Activated CD4-positive, alpha-beta T cell treated with anti-CD3 and anti-CD28 coated beads for 36 hours (primary cell): ENCODE measurements at regions of chr7 and their contacts with region 1.

Region 1: DNA sequence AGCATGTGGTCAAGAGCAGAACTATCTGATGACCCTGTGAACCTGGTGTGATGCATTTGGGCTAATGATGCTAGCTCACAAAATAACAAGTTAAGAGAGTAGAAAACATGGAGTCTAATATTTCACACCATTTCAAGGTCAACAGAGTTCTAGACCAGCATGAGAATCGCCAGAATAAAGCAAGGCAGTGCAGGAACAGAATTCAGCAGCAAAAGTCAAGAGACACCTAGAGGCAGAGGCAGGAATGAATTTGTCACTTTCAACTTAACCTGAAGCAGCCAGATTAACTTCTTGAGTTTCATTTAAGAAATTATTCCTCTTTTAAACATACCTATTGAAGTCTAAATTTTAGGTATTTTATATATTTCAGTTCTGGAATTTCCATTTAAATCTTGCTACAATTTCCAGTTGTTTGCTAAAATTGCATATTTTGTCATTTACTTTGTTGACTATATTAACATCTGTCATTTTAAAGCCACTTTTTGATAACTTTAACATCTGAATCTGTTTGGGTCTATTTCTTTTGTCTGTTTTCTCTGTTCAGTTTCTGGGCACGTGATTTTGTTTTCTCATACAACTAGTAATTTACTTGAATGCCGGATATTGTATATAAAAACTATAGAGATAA is 44.2 kb upstream of the PRSS58 start:
- DNase-seq: no peak
- ATAC-seq: no peak
- H3K4me3 Mint-ChIP-seq: no peak overlapping the region
- H3K27ac Mint-ChIP-seq: no peak overlapping the region
- H3K4me1 Mint-ChIP-seq: peaks cover 29% of the 10 kb centered on the region
- H3K27me3 Mint-ChIP-seq: peaks cover 8% of the 10 kb centered on the region

Region 2: DNA sequence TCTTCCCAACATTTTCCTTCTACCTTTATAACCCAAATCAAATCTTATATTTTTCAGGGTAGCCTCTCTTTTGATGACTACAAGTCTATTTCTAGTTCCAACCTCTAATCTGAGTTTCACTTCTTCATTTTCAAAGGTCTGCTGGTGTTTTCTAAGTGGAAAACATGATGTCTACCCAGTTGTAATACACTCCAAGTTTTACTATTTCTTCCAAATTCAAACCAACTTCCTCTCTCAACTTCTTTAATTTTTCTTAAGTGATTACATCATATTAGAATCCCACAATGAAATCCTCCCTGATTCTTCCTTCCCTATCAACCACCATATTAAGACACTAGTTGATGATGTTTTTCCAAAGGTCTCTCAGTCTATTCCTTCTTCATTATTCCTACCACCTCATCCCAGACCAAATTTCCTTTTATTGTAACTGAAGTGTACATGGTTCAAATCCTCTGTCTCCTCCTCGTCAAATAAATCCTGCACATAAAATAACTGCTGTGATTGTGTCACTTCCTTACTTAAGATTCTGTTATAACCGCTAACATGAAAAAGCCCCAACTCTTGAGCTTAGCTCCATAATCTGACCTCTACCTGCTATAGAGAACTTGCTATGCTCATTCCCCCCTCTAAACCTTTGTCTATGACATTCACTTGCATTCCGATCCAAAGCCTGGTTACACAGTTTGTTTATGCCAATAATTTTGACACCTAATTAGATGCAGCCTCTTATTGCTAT is 341.2 kb before region 1 on chr7:
- CTCF ChIA-PET with region 1: no interaction called
- POLR2A ChIA-PET with region 1: no interaction called
- intact Hi-C with region 1: no loop called
- DNase-seq: no peak
- ATAC-seq: no peak
- H3K4me3 Mint-ChIP-seq: no peak overlapping the region
- H3K27ac Mint-ChIP-seq: no peak overlapping the region
- H3K4me1 Mint-ChIP-seq: peaks cover 3% of the 10 kb centered on the region
- H3K27me3 Mint-ChIP-seq: peaks cover 3% of the 10 kb centered on the region

Region 3: GRCh38 chr7:142063551-142064442 is 238.2 kb before region 1 on chr7:
- CTCF ChIA-PET with region 1: no interaction called
- POLR2A ChIA-PET with region 1: no interaction called
- intact Hi-C with region 1: no loop called
- DNase-seq: no peak
- ATAC-seq: no peak
- H3K4me3 Mint-ChIP-seq: no peak overlapping the region
- H3K27ac Mint-ChIP-seq: no peak overlapping the region
- H3K4me1 Mint-ChIP-seq: no peaks in the 10 kb centered on the region
- H3K27me3 Mint-ChIP-seq: peaks cover 6% of the 10 kb centered on the region

Region 4: GRCh38 chr7:142313528-142313927 is 11.5 kb after region 1 on chr7:
- CTCF ChIA-PET with region 1: interaction called, 58 read pairs
- POLR2A ChIA-PET with region 1: no interaction called
- intact Hi-C with region 1: no loop called
- DNase-seq: peak; percentile 63
- ATAC-seq: peak; percentile 82
- H3K4me3 Mint-ChIP-seq: peak overlapping the region; percentile 55
- H3K27ac Mint-ChIP-seq: peak overlapping the region; percentile 37
- H3K4me1 Mint-ChIP-seq: peaks cover 13% of the 10 kb centered on the region
- H3K27me3 Mint-ChIP-seq: peaks cover 13% of the 10 kb centered on the region

Region 5: DNA sequence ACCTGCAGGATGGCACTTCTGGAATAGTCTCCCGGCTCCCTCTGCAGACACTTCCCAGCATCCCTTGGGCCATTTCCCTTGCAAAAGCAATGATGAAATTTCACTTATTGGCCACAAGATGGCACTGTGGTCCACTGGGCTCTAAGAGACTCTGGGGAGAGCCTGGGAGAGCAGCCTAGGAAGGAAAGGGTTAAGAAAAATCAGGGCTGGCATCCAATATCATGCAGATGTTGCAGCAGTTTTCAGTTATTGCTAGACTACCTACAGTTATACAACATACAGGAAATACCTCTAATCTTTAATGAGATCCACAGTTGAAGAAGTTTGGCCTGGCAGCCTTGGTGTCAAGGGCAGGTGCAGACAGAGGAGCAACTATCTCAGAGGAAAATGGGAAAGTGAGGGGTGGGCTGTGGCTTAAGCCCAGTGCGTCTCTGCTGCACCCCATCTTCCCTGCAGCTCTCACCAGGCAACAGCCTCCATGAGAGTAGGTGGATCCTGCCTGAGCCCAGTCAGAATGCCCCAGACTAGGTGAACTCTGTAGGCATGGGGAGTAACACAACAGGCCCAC is 56.0 kb after region 1 on chr7:
- CTCF ChIA-PET with region 1: interaction called, 12 read pairs
- POLR2A ChIA-PET with region 1: no interaction called
- intact Hi-C with region 1: no loop called
- DNase-seq: peak; percentile 57
- ATAC-seq: peak; percentile 80
- H3K4me3 Mint-ChIP-seq: no peak overlapping the region
- H3K27ac Mint-ChIP-seq: no peak overlapping the region
- H3K4me1 Mint-ChIP-seq: peaks cover 33% of the 10 kb centered on the region
- H3K27me3 Mint-ChIP-seq: peaks cover 4% of the 10 kb centered on the region

Region 6: GRCh38 chr7:142817506-142817905 is 515.5 kb after region 1 on chr7:
- CTCF ChIA-PET with region 1: interaction called, 4 read pairs
- POLR2A ChIA-PET with region 1: interaction called, 11 read pairs
- intact Hi-C with region 1: no loop called
- DNase-seq: no peak
- ATAC-seq: peak; percentile 42
- H3K4me3 Mint-ChIP-seq: no peak overlapping the region
- H3K27ac Mint-ChIP-seq: peak overlapping the region; percentile 2
- H3K4me1 Mint-ChIP-seq: peaks cover 43% of the 10 kb centered on the region
- H3K27me3 Mint-ChIP-seq: no peaks in the 10 kb centered on the region